WTC11 (cell line): ENCODE measurements at regions of chr5 and their contacts with region 1.

Region 1: DNA sequence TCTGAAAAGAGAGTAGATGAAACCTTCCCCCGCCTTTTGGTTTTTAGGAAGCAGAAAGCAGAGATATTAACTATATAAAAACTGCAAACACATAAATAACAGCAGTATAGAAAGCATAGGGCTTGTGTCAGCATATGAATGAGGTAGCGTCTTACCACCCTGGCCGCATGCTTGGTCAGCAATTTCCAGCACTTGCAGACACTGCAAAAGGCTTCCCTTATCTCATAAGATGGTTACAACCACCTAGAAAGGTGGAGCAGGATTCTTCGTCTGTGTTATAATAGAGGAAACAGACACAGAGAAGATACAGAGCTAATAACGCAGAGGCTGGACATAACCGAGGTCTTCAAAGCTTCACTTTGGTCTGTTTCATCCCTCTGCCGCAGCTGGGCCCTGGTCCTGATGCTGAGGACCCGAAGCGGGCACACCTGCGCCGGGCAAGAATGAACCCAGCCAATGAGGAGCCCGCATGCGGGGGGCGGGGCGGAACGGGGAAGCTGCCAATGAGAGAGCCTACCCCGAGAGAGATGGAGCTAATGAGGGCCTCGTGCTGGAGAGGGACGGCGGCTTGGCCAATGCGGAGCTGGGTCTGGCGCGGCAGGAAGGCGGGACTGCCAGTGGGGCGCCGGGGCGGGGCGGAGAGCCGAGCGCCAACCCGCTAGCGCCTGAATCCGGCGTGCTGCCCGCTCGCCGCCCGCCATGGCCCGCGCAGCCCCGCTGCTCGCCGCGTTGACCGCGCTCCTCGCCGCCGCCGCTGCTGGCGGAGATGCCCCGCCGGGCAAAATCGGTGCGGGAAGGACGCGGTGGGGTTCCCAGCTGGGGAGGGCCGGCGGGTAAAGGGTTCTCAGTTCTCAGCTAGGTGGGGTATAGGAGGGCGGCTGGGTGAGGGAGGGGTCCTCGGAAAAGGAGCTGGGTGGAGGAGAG is at the start of gene PCYOX1L:
- DNase-seq: peak; percentile 99
- ATAC-seq: peak; percentile 100
- H3K4me3 Mint-ChIP-seq: peak within 1 kb of the TSS; percentile 87
- H3K27ac Mint-ChIP-seq: no peak within 1 kb of the TSS
- H3K4me1 Mint-ChIP-seq: peaks cover 16% of the 10 kb centered on the region
- H3K27me3 Mint-ChIP-seq: peaks cover 3% of the 10 kb centered on the region; the same call in 1 of the 2 replicates
- CTCF ChIP-seq: no peak
- total RNA-seq, gene PCYOX1L: 8.1 to 19.2 TPM (median 17.2 TPM) in 3 replicates

Region 2: GRCh38 chr5:149317281-149318048 is 40.2 kb before region 1 on chr5:
- CTCF ChIA-PET with region 1: interaction called, 21 read pairs
- POLR2A ChIA-PET with region 1: interaction called, 3 read pairs
- DNase-seq: no peak
- ATAC-seq: peak; percentile 52
- H3K4me3 Mint-ChIP-seq: no peak overlapping the region
- H3K27ac Mint-ChIP-seq: no peak overlapping the region; the same call in 1 of the 2 replicates
- H3K4me1 Mint-ChIP-seq: peaks cover 16% of the 10 kb centered on the region
- H3K27me3 Mint-ChIP-seq: no peaks in the 10 kb centered on the region; the same call in 1 of the 2 replicates
- CTCF ChIP-seq: 0 out of 2 replicates have a peak, but pooled peaks have one; percentile 24

Region 3: DNA sequence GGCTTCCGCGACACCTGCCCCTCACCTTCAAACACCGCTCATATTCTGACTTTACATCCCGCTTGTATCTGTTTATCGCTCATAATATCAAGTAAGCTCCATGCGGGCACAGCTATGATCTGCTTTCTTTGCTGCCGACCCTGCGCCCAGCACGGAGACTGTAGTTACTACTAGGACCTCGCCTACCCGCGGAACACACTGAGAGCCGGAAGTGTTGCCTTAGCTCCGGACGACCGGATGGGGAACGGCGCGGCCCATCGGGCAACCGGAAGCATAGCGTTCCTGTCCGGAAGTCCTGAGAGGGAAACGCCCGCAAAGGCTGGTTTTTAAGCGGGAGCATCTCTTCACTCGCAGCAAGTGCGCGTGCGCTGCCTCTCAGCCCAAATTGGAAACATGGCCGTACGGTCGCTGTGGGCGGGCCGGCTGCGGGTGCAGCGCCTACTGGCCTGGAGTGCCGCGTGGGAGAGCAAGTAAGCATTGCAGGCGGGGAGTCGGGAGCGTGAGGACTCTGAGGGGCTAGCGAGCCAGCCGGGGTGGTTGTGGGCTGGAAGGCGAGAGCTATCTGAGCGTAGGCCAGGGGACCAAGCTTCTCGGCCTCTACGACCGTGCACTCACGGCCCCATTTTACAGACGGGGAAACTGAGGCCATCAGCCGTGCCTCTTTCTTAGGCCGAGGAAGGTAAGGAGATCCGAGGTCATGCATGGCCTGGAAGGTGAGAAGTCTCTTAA is 12.3 kb before region 1 on chr5 and contains the start of gene GRPEL2:
- CTCF ChIA-PET with region 1: interaction called, 6 read pairs
- POLR2A ChIA-PET with region 1: interaction called, 16 read pairs
- DNase-seq: peak; percentile 94
- ATAC-seq: peak; percentile 97
- H3K4me3 Mint-ChIP-seq: peak within 1 kb of the TSS; percentile 89
- H3K27ac Mint-ChIP-seq: peak within 1 kb of the TSS; percentile 90
- H3K4me1 Mint-ChIP-seq: peaks cover 20% of the 10 kb centered on the region
- H3K27me3 Mint-ChIP-seq: peaks cover 13% of the 10 kb centered on the region
- CTCF ChIP-seq: no peak
- total RNA-seq, gene GRPEL2: 35.3 to 48.6 TPM (median 35.5 TPM) in 3 replicates

Region 4: GRCh38 chr5:149397530-149397929 is 39.9 kb after region 1 on chr5:
- CTCF ChIA-PET with region 1: no interaction called
- POLR2A ChIA-PET with region 1: no interaction called
- DNase-seq: no peak
- ATAC-seq: no peak
- H3K4me3 Mint-ChIP-seq: no peak overlapping the region
- H3K27ac Mint-ChIP-seq: no peak overlapping the region
- H3K4me1 Mint-ChIP-seq: peaks cover 6% of the 10 kb centered on the region; the same call in 1 of the 2 replicates
- H3K27me3 Mint-ChIP-seq: no peaks in the 10 kb centered on the region; the same call in 1 of the 2 replicates
- CTCF ChIP-seq: no peak

Region 5: DNA sequence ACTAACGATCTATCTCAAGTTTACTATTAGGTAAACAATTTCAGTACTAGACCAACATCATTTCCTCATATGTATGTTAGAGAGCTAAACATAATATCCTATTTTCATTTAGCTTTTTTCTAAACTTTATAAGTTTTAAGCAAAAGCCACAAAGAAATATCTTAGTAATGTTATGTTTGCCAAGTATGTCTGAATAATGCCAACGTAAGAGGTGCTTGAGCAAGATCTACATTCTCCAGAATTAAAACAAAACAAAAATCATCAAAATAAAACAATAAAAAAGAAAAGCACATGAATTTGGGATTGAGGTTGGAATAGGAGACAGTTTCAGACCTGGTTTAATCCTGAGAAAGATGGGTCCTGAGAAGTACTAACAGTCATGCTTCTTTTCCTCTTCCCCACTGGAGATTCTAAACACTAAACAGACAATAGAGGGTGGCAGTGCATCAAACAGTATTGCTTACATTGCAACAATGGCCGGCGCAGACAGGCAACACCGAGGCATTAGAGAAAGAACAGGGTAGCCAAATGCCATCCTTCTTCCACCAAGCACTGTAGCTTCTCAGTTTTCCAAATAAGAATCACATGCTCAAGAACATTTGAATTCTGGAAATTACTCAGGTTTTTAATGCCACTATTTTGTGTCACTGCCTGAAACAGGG is 160.0 kb after region 1 on chr5:
- CTCF ChIA-PET with region 1: no interaction called
- POLR2A ChIA-PET with region 1: no interaction called
- DNase-seq: no peak
- ATAC-seq: no peak
- H3K4me3 Mint-ChIP-seq: peak overlapping the region; percentile 2; the same call in 1 of the 2 replicates
- H3K27ac Mint-ChIP-seq: peak overlapping the region; percentile 95
- H3K4me1 Mint-ChIP-seq: peaks cover 66% of the 10 kb centered on the region
- H3K27me3 Mint-ChIP-seq: no peaks in the 10 kb centered on the region
- CTCF ChIP-seq: no peak